ENCODE measurements at regions of chr17 and their contacts with region 1.

Region 1: DNA sequence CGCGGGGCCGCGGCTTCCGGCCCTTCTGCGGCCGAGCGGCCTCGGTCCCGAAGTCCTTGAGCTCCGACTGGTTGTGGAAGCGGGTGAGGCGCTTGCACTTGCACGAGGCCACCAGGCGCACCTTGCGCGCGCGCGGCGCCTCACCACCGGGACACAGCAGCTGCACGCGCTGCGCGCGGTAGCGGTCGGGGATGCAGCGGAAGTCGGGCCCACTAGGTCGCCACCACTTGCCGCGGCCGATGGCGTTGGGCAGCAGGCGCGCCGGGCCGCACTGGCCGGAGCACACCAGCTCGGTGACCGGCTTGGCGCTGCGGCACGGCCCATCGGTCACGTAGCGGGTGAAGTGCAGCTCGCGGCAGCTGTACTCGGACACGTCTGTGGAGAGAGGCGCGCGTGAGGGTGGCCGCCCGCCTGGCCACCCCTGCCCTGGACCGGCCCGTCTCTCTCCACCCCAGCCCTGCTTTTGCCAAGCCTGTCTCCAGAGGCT is 3.2 kb downstream of the SOST start:
- DNase-seq: no peak

Region 2: GRCh38 chr17:43701318-43701743 is 54.1 kb before region 1 on chr17:
- in situ Hi-C with region 1: loop called (anchors 10 kb)
- DNase-seq: no peak

Region 3: GRCh38 chr17:44097110-44097958 is 341.9 kb after region 1 on chr17:
- in situ Hi-C with region 1: no loop called
- DNase-seq: no peak